ENCODE measurements at regions of chr2 and their contacts with region 1.

Region 1: GRCh38 chr2:21118302-21118920 is 5.4 kb upstream of the TDRD15 start:
- DNase-seq: peak; percentile 75
- H3K4me3 ChIP-seq: no peak overlapping the region
- H3K27ac ChIP-seq: no peak overlapping the region
- H3K4me1 ChIP-seq: no peaks in the 10 kb centered on the region
- H3K27me3 ChIP-seq: no peaks in the 10 kb centered on the region
- CTCF ChIP-seq: peak; percentile 70
- EP300 ChIP-seq: no peak
- RAD21 ChIP-seq: peak; percentile 97

Region 2: DNA sequence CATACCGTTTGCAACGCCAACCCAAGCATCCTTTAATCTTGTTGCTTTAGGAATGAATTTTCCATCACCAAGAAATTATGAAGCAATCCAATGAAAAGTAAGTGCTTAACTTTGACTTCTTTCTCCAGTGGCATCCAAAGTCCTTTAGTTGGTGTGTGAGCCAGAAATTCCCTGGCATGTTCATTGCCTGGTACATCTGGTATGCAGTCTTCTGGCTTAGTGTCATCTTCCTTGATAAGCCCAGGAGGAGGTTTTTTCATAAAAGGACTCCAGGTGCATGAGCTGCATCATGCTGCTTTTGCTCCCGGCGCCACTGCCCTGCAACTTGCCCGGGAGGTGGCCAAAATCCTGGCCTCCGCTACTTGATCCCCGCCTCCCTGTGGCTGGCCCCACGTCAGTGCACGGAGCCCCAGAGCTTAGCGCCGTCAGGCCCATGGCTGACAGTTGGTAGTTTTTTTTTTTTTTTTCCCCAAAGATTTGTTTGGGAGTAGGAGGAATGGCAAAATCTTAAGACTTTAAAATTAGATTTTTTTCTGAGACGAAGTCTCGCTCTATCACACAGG is 826.5 kb before region 1 on chr2:
- CTCF ChIA-PET with region 1: no interaction called
- POLR2A ChIA-PET with region 1: no interaction called
- DNase-seq: no peak
- H3K4me3 ChIP-seq: no peak overlapping the region
- H3K27ac ChIP-seq: peak overlapping the region; percentile 37 to 64
- H3K4me1 ChIP-seq: peaks cover 0 to 7% of the 10 kb centered on the region in 2 experiments; a peak in 2 of 4 replicates
- H3K27me3 ChIP-seq: no peaks in the 10 kb centered on the region
- CTCF ChIP-seq: no peak
- EP300 ChIP-seq: no peak
- RAD21 ChIP-seq: no peak

Region 3: DNA sequence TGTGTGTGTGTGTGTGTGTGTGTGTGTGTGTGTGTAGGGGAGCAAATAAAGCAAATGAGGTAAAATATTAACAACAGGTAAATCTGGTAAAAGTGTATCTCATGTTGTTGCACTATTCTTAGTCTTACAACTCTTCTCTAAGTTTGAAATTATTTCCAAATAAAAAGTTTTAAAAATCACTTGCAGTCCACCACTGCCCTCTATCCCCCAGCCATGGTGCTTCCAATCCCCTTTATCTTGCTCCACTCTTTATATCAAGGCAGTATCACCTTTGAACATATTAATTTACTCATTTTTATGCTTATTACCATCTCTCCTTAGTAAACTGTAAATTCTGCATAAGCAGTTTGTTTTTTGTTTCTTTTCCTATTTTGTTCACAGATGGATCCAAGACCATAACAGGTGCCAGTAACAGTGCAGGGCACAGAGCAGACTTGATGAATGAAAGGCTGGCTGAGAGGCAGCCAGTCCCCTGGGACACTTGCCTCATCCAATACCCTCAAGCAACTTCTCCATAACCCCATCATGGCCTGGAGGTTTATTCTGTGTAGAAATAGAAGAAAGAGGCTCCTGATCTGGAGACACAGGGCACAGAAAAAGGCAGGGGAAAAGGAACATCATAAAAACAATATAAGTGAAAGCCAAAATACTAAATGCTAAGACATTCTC is 363.1 kb before region 1 on chr2:
- CTCF ChIA-PET with region 1: no interaction called
- POLR2A ChIA-PET with region 1: no interaction called
- DNase-seq: no peak
- H3K4me3 ChIP-seq: no peak overlapping the region
- H3K27ac ChIP-seq: no peak overlapping the region
- H3K4me1 ChIP-seq: no peaks in the 10 kb centered on the region
- H3K27me3 ChIP-seq: no peaks in the 10 kb centered on the region
- CTCF ChIP-seq: peak; percentile 40
- EP300 ChIP-seq: no peak
- RAD21 ChIP-seq: peak; percentile 38

Region 4: DNA sequence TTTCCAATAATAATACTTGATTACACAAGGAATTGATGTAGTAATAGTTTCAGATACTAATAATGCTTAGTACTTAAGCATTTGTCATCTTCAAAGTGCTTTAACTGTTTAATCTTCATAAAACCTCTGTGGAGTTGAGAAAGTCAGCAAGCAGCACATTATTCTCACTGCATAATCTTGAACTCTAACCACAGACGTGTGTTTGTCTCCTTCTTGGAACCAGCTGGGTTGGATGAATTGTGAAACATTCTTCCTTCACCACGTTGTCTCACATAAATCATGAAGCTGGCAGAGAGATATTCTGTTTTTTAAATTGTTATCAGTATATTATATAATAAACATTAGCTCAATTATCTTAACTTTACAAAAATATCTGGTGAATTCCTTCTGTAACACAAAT is 240.5 kb before region 1 on chr2:
- CTCF ChIA-PET with region 1: no interaction called
- POLR2A ChIA-PET with region 1: no interaction called
- DNase-seq: no peak
- H3K4me3 ChIP-seq: no peak overlapping the region
- H3K27ac ChIP-seq: no peak overlapping the region
- H3K4me1 ChIP-seq: peaks cover 0 to 10% of the 10 kb centered on the region in 2 experiments; a peak in 2 of 4 replicates
- H3K27me3 ChIP-seq: no peaks in the 10 kb centered on the region
- CTCF ChIP-seq: no peak
- EP300 ChIP-seq: no peak
- RAD21 ChIP-seq: no peak

Region 5: DNA sequence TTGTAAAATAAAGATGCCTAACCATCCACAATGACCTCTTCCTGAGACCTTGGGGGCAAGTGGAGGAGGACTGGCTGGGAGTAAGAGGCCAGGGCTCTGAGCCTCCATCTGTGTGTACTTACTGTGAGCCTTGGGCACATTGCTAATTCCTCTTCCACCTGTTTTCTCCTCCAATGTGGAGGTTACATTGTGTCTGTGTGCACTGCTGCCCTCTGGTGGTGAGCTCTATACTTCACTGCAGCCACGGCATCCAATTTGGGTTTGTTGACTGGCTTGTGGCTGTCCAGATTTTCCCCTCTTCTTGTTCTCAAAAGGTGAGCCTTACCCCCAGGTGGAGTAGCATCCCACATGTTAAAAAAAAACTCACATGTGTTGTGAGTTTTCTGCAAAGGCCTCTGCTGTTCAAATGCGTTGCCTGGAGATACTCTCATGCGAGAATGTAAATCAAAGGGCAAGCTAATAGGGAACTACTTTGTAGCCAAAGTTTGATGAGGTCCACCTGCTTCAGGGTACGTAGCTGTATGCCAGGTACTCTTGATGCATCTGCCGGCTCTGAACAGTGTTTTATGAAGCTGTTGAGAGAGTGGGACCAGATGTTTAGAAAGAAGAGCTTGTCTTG is 155.4 kb before region 1 on chr2:
- CTCF ChIA-PET with region 1: interaction called, 11 read pairs
- POLR2A ChIA-PET with region 1: no interaction called
- DNase-seq: peak; percentile 84
- H3K4me3 ChIP-seq: no peak overlapping the region; a peak in 1 of 4 replicates
- H3K27ac ChIP-seq: no peak overlapping the region
- H3K4me1 ChIP-seq: no peaks in the 10 kb centered on the region; a peak in 1 of 4 replicates
- H3K27me3 ChIP-seq: peaks cover 14% of the 10 kb centered on the region; the same call in 1 of the 2 replicates
- CTCF ChIP-seq: peak; percentile 98
- EP300 ChIP-seq: no peak
- RAD21 ChIP-seq: peak; percentile 97

Region 6: GRCh38 chr2:21042958-21043743 is 75.3 kb before region 1 on chr2:
- CTCF ChIA-PET with region 1: interaction called, 315 read pairs
- POLR2A ChIA-PET with region 1: interaction called, 3 read pairs
- DNase-seq: peak; percentile 91
- H3K4me3 ChIP-seq: peak overlapping the region in 1 of 2 experiments; percentile 41; a peak in 1 of 4 replicates
- H3K27ac ChIP-seq: no peak overlapping the region
- H3K4me1 ChIP-seq: peaks cover 0 to 23% of the 10 kb centered on the region in 2 experiments; a peak in 2 of 4 replicates
- H3K27me3 ChIP-seq: no peaks in the 10 kb centered on the region; the same call in 1 of the 2 replicates
- CTCF ChIP-seq: peak; percentile 100
- EP300 ChIP-seq: no peak
- RAD21 ChIP-seq: peak; percentile 100

Region 7: DNA sequence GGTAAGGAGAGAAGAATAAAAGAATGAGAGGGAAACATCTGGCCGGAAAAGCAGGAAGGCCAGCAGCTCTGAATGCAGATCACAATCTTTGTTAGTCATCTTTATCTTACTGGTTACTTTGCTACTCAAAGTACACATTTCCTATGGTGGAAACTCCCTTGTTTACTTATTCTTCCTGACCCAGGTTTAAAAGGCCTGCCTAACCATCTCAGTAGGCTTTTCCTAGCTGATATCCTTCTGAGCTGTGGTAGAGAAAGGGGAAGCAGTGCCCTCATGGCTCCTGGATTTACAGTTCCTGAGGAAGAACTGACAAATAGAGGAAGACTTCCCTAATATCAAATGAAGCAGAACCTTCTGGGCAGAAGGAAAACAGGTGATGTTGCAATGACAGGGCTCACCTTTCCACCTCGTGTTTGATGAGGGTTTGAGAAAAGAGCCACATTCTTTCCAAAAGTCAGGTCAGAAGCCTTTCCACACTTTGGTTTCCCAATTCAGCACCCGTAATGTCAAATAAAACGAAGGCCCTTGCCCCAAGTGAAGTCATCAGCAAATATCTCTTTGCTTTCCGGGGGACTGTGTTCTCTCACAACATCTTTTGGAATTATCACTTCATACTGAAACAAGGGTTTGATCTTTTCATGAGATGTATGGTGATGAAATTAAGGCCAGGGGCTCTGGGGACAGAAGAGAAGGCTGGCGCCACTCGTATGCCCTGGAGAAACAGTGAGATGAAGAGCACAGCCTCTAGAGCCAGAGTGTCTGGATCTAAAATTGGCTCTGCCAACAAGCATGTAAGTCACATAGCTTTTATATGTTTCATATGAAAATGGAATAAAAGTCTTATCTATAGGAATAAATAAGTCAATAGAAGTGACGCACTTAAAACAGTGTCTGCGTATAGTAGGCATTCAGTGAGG is 47.8 kb before region 1 on chr2:
- CTCF ChIA-PET with region 1: interaction called, 12 read pairs
- POLR2A ChIA-PET with region 1: no interaction called
- DNase-seq: peak; percentile 42
- H3K4me3 ChIP-seq: no peak overlapping the region
- H3K27ac ChIP-seq: peak overlapping the region in 1 of 2 experiments; percentile 89; a peak in 1 of 4 replicates
- H3K4me1 ChIP-seq: peaks cover 0 to 19% of the 10 kb centered on the region in 2 experiments; a peak in 2 of 4 replicates
- H3K27me3 ChIP-seq: no peaks in the 10 kb centered on the region
- CTCF ChIP-seq: no peak
- EP300 ChIP-seq: peak in 1 of 2 experiments; percentile 83; a peak in 2 of 4 replicates
- RAD21 ChIP-seq: no peak

Region 8: GRCh38 chr2:21096458-21096857 is 22.0 kb before region 1 on chr2:
- CTCF ChIA-PET with region 1: interaction called, 10 read pairs
- POLR2A ChIA-PET with region 1: no interaction called
- DNase-seq: no peak
- H3K4me3 ChIP-seq: no peak overlapping the region
- H3K27ac ChIP-seq: no peak overlapping the region
- H3K4me1 ChIP-seq: no peaks in the 10 kb centered on the region
- H3K27me3 ChIP-seq: no peaks in the 10 kb centered on the region
- CTCF ChIP-seq: no peak
- EP300 ChIP-seq: no peak
- RAD21 ChIP-seq: no peak

Region 9: DNA sequence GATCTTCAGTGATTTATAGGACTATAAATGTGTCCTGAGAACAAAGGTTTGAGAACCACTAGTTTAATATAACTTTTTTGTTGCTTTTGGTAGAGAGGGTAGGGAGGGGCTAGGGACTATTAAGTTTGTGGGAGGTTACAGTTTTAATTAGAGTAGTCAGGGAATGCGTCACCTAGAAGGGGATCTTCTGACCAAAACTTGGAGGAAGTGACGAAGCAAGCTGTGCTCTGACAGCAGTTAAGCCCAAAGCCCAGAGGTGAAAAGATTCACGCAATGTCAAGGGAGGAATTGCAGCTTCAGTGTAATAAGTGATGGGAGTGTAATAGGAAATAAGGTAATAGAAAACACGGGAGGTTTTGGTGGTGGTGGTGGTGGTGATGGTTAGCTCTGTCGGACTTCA is 13.4 kb after region 1 on chr2:
- CTCF ChIA-PET with region 1: interaction called, 14 read pairs
- POLR2A ChIA-PET with region 1: no interaction called
- DNase-seq: no peak
- H3K4me3 ChIP-seq: no peak overlapping the region
- H3K27ac ChIP-seq: no peak overlapping the region
- H3K4me1 ChIP-seq: no peaks in the 10 kb centered on the region
- H3K27me3 ChIP-seq: no peaks in the 10 kb centered on the region
- CTCF ChIP-seq: no peak
- EP300 ChIP-seq: no peak
- RAD21 ChIP-seq: no peak